ENCODE measurements at regions of chr5 and their contacts with region 1.

Region 1: DNA sequence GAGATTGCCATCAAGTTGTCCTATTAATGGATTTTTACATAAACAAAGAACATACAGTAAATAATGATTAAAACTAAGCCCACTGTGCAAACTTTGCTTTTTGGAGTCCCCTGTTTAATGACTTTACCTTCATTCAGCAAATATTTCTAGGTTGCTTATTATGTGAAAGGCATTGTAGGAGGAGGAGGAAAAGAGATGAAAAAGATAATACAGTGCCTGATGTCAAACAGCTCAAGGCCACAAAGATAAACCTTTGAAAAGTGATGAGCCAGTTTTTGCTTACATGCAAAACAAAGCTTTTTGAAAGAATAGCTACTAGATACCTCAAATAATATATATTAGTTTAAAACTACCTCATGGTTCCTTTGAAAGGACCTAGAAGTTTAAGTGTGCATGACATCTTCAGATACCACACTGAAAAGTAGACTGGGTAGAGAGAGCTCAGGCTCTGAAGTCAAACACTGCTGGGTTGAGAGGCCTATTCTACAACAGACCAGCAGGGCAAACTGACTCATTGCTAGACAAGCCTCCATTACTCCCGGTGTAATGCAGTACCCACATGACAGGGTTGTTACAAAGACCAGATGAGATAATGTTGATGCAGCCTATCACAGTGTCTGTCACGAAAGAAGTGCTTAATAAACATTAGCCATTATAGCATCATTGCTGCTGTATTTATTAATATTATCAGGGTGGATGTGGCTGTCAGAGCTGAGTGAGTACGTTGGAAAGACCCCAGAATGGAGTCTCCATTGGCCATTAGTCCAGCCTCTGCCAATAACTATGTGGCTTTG is 11.8 kb downstream of the DEPDC1B start:
- DNase-seq: peak; percentile 53
- H3K4me3 Mint-ChIP-seq: no peak overlapping the region
- H3K27ac Mint-ChIP-seq: no peak overlapping the region
- H3K4me1 Mint-ChIP-seq: peaks cover 12% of the 10 kb centered on the region
- H3K27me3 Mint-ChIP-seq: no peaks in the 10 kb centered on the region
- CTCF ChIP-seq: peak; percentile 22

Region 2: GRCh38 chr5:60578315-60578714 is 109.8 kb before region 1 on chr5:
- CTCF ChIA-PET with region 1: no interaction called
- POLR2A ChIA-PET with region 1: no interaction called
- intact Hi-C with region 1: no loop called
- DNase-seq: no peak
- H3K4me3 Mint-ChIP-seq: no peak overlapping the region
- H3K27ac Mint-ChIP-seq: no peak overlapping the region
- H3K4me1 Mint-ChIP-seq: no peaks in the 10 kb centered on the region
- H3K27me3 Mint-ChIP-seq: no peaks in the 10 kb centered on the region
- CTCF ChIP-seq: no peak

Region 3: GRCh38 chr5:60668686-60669304 is 19.3 kb before region 1 on chr5:
- CTCF ChIA-PET with region 1: interaction called, 10 read pairs
- POLR2A ChIA-PET with region 1: no interaction called
- intact Hi-C with region 1: no loop called
- DNase-seq: peak; percentile 58
- H3K4me3 Mint-ChIP-seq: no peak overlapping the region
- H3K27ac Mint-ChIP-seq: no peak overlapping the region
- H3K4me1 Mint-ChIP-seq: no peaks in the 10 kb centered on the region
- H3K27me3 Mint-ChIP-seq: no peaks in the 10 kb centered on the region
- CTCF ChIP-seq: peak; percentile 19

Region 4: DNA sequence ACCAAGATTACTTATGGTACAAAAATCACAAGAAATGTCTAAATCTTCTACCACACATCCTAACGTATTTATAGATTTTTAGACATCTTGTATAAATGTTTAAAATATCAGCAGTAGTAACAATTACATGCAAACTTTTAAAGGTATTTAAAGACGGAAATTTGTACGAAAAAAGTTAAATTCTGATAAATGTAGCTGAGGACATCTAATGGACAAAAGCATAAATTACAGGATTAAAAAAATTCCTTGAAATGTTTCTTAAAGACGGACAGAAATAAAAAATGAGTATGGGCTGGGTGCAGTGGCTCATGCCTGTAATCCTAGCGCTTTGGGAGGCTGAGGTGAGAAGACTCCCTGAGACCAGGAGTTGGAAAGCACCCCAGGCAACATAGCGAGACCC is 240.9 kb after region 1 on chr5:
- CTCF ChIA-PET with region 1: interaction called, 13 read pairs
- POLR2A ChIA-PET with region 1: no interaction called
- intact Hi-C with region 1: no loop called
- DNase-seq: no peak
- H3K4me3 Mint-ChIP-seq: no peak overlapping the region
- H3K27ac Mint-ChIP-seq: no peak overlapping the region
- H3K4me1 Mint-ChIP-seq: no peaks in the 10 kb centered on the region
- H3K27me3 Mint-ChIP-seq: no peaks in the 10 kb centered on the region
- CTCF ChIP-seq: peak; percentile 48

Measured in MCF 10A (cell line).